Activated CD4-positive, alpha-beta T cell treated with anti-CD3 and anti-CD28 coated beads, Interleukin-2, amount 10 ng/mL, durations not matched to agents 7 days and 5 days (primary cell): ENCODE measurements at regions of chr14 and their contacts with region 1.

Region 1: DNA sequence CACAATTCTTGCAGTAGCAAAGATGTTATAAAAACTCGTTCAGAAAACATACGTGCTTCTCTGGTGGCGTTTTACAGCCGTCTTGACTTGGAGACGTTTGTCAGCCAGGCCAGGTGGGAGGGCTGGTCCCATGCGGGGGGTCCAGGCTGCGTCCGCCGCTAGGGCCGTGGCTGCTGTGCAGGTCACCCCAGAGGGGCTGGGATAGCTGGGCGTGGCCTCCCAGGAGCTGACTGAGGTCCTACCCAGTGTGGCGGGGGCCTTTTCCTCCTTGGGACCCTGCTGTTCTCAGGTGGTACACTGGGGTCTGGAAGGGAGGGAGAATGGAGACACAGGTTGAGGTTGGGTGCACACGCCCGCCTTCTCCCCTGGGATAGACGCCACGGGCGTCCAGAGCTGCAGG is 25.2 kb downstream of the MTA1 start:
- DNase-seq: no peak
- H3K4me3 Mint-ChIP-seq: no peak overlapping the region
- H3K27ac Mint-ChIP-seq: no peak overlapping the region
- H3K4me1 Mint-ChIP-seq: no peaks in the 10 kb centered on the region
- H3K27me3 Mint-ChIP-seq: no peaks in the 10 kb centered on the region

Region 2: DNA sequence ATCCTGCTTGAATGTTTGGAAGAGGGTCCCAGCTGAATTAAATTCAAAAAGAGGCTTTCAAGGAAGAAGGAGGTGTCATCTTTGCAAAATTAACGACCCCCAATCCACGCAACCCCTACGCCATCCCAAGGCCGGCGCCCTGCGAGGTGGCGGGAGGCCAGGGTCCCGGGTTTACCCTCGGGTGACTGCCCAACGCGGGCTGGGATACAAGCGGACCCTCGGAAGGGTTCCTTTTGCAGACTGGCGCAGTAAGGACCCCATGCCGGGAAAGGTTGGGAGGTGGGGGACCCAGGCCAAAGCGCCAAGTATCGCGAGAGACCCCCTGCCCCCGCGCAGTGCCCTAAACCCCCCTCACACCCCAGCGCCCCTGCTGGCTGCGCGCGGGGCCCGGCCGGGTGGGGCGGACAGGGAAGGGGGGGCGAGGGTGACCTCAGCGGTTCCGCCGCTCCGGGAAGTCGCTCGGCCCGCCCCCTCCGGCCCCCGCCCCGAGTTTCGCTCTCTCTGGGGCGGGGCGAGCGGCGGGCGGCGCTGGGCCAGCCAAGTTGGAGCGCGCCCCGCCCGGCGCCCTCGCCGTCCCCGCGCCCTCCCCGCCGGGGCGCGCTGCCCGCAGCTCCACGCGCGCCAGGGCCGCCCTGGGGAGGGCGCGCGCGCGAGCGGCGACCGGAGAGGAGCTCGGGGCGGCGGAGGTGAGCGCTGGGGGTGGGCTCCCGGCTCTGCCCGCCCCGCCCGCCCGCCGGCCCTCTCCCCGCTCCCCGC is 644.7 kb before region 1 on chr14:
- CTCF ChIA-PET with region 1: no interaction called
- POLR2A ChIA-PET with region 1: no interaction called
- DNase-seq: peak; percentile 82
- H3K4me3 Mint-ChIP-seq: peak overlapping the region; percentile 59
- H3K27ac Mint-ChIP-seq: peak overlapping the region; percentile 63
- H3K4me1 Mint-ChIP-seq: peaks cover 40% of the 10 kb centered on the region
- H3K27me3 Mint-ChIP-seq: peaks cover 6% of the 10 kb centered on the region

Region 3: GRCh38 chr14:105430535-105430934 is 14.3 kb before region 1 on chr14:
- CTCF ChIA-PET with region 1: interaction called, 5 read pairs
- POLR2A ChIA-PET with region 1: interaction called, 12 read pairs
- DNase-seq: no peak
- H3K4me3 Mint-ChIP-seq: no peak overlapping the region
- H3K27ac Mint-ChIP-seq: no peak overlapping the region
- H3K4me1 Mint-ChIP-seq: peaks cover 15% of the 10 kb centered on the region
- H3K27me3 Mint-ChIP-seq: no peaks in the 10 kb centered on the region

Region 4: DNA sequence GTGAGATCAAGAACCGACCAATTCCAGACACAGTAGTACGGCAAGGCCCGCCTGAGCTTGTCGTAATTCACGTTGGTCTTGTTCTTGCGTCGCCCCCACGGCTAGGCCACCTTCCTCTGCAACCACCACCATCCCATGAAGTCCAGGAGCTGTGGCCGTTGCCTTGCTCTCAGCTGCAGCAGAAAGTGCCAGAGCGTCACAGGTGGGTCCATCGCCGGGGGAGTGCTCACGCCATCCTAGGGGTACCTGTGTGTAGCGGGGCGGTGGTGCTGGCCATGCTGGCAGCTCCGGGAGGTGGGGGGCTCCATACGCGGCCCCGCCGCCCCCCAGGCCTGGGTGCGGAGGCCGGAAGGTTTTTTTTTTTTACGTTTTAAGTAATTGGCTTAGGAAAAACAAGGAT is 104.6 kb after region 1 on chr14:
- CTCF ChIA-PET with region 1: no interaction called
- POLR2A ChIA-PET with region 1: no interaction called
- DNase-seq: no peak
- H3K4me3 Mint-ChIP-seq: no peak overlapping the region
- H3K27ac Mint-ChIP-seq: no peak overlapping the region
- H3K4me1 Mint-ChIP-seq: no peaks in the 10 kb centered on the region
- H3K27me3 Mint-ChIP-seq: peaks cover 6% of the 10 kb centered on the region